Colonic mucosa (tissue), 4 donors: ENCODE measurements at regions of chr17 and their contacts with region 1.

Region 1: DNA sequence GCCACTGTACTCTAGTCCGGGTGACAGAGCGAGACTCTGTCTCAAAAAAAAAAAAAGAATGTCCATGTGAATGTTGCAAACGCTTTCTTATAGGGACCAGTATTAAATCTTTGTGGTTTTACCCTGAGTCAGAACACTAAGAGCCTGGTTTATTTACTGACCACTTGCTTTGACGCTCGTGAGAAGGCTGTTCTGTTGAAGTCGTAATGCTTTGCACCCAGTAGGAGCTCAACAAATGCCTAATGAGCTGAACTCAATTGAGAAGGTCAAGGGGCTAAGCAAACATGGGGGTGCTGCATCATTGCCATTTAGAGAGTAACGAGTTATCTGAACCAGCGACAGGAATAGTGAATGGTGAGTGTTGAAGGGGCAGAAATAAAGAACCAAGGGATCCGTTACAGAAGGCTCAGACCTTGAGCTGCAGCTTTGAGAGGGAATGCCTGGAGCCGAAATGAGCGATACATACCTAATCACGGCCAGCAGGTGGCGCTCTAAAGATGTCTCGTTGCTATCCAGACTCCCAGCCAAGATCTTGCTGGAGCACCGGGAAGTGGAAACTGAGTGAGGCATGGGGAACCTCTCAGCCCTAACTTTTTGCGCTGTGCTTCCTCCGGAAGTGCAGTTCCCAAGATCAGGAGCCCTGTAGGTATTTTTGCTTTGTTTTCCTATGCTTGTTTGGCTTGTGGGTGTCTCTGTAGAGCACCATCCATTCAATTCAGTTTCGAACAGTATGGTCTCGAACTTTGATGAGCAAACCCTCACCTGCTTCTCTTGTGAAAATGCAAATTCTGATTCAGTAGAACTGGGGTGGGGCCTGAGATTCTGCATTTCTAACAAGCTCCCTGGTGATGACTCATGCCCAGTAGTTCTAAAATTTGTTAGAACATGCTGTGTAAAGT is 12.6 kb upstream of the RNF222 start:
- DNase-seq: peak; percentile 92
- H3K4me3 ChIP-seq: no peak overlapping the region
- H3K27ac ChIP-seq: no peak overlapping the region
- H3K4me1 ChIP-seq: no peaks in the 10 kb centered on the region
- H3K27me3 ChIP-seq: no peaks in the 10 kb centered on the region
- CTCF ChIP-seq: peak; percentile 76

Region 2: DNA sequence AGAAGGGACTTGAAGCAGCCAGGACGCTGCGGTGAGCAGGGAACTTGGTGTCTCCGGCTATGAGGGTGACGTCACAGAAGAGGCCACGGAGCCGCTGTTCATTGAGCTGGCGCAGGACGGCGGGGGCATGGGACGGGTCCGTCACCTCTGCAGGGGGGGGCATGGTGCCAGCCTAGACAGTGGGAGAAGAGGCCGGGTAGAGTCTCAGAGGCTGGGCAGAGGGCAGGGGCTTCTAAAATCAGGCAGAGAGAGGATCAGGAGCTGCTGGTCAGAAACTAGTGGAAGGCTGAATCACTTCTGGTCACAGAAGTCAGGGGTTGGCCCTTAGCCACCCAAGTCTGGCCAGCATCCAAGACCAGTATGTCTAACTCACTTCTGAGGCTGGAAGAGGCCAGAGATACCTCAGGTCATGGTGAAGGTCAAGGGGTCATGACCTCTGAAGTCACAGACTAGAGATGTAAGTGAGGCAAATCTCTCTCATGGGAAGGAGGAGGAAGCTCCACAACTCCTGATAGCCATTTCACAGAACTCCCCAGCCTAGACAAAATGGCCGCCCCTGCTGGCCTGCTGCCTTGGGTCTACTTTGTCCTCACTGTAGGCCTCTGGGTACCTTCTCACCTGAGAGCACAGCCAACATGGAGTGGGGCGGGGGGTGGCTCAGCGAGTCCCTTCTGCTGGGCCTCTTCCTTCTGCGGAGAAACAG is 943.4 kb before region 1 on chr17:
- intact Hi-C with region 1: no loop called
- DNase-seq: peak; percentile 36
- H3K4me3 ChIP-seq: no peak overlapping the region
- H3K27ac ChIP-seq: peak overlapping the region; percentile 27
- H3K4me1 ChIP-seq: no peaks in the 10 kb centered on the region
- H3K27me3 ChIP-seq: no peaks in the 10 kb centered on the region
- CTCF ChIP-seq: no peak

Region 3: DNA sequence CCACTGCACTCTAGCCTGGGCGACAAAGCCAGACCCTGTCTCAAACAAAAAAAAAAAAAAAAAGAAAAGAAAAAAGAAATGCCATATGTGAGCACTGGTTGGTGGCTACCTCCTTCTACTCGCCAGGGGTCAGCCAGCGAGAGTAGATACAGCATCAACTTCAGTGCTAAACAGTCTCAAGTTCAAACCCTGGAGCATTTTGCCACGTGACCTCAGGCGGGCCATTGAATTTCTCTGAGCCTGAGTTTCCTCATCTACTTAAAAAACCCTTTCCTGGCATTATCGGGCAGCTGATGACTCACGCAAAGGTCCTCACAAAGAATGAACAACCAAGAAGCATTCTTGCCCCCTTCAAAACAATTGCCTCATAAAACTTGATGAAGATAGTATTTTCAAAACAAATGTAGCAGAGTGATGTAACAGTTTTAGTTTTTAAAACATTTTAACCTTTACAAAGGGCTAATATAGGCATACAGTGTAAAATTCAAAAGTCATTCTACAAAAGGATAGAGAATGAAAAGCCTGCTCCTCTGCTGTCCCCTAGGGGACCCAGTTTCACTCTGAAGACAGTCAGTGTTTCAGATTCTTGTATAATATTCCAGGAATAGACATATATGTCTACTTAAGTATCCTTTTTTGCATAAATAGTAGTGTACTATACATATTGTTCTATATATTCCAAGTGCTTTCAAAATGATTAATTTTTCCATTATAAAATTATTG is 664.3 kb before region 1 on chr17:
- intact Hi-C with region 1: no loop called
- DNase-seq: no peak
- H3K4me3 ChIP-seq: no peak overlapping the region
- H3K27ac ChIP-seq: no peak overlapping the region
- H3K4me1 ChIP-seq: no peaks in the 10 kb centered on the region
- H3K27me3 ChIP-seq: no peaks in the 10 kb centered on the region
- CTCF ChIP-seq: no peak

Region 4: DNA sequence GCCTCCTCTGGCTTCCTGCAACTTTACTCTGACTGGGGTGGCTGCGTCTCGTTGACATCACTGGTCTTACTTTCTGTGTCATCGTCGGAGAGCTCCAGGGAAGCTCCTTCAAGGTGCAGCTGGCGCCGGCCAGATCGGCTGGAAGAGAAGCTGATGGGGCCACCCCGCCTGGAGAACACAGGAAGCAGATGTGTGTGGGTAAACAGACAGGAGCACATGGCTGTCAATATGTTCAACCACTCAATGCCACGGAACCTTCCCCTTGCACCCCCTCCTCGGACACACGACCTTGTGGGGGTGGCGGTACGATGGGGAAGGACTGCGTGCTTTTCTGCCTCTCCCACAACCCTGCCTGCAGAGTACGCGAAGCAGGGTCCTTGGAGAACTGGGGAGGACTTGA is 65.6 kb after region 1 on chr17:
- intact Hi-C with region 1: loop called (anchors 2 kb)
- DNase-seq: no peak
- H3K4me3 ChIP-seq: no peak overlapping the region
- H3K27ac ChIP-seq: no peak overlapping the region
- H3K4me1 ChIP-seq: no peaks in the 10 kb centered on the region
- H3K27me3 ChIP-seq: no peaks in the 10 kb centered on the region
- CTCF ChIP-seq: no peak

Region 5: GRCh38 chr17:8745586-8746500 is 335.6 kb after region 1 on chr17:
- intact Hi-C with region 1: loop called (anchors 2 kb)
- DNase-seq: peak; percentile 66
- H3K4me3 ChIP-seq: peak overlapping the region; percentile 63
- H3K27ac ChIP-seq: no peak overlapping the region
- H3K4me1 ChIP-seq: no peaks in the 10 kb centered on the region
- H3K27me3 ChIP-seq: no peaks in the 10 kb centered on the region
- CTCF ChIP-seq: peak; percentile 94

Region 6: GRCh38 chr17:8894673-8895578 is 484.7 kb after region 1 on chr17:
- intact Hi-C with region 1: loop called (anchors 10 kb)
- DNase-seq: peak; percentile 59
- H3K4me3 ChIP-seq: no peak overlapping the region
- H3K27ac ChIP-seq: no peak overlapping the region
- H3K4me1 ChIP-seq: no peaks in the 10 kb centered on the region
- H3K27me3 ChIP-seq: no peaks in the 10 kb centered on the region
- CTCF ChIP-seq: peak; percentile 67